Left cardiac atrium (tissue), 4 donors: ENCODE measurements at regions of chr6 and their contacts with region 1.

Region 1: GRCh38 chr6:122459213-122459612 is 12.4 kb downstream of the SERINC1 start:
- DNase-seq: no peak
- ATAC-seq: no peak

Region 2: DNA sequence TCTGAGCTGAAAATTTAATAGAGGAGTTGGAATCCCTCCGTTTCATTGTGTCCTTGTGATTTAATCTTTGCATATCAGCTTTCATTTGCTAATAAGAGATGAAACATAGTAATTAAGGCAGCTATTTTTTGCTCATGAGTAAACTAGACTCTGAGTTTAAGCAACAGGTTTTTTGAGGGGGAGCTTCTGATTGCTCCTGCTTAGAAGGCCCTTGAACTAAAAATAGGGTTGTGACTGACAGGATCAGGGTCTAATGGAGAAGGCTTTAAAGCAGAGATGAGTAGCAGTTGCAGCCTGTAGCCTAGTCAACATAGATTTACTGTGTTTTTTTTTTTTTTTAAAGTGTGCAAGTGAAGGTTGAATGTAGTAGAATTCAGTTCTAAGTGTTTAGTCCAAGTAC is 42.4 kb before region 1 on chr6:
- intact Hi-C with region 1: loop called in 1 of 2 experiments (anchors 5 kb)
- DNase-seq: no peak
- ATAC-seq: peak; percentile 73 to 83